ENCODE measurements at regions of chr13 and their contacts with region 1.

Region 1: GRCh38 chr13:41193919-41194824 is at the start of gene KBTBD7:
- DNase-seq: peak; percentile 99
- H3K4me3 ChIP-seq: peak within 1 kb of the TSS; percentile 73
- H3K27ac ChIP-seq: peak within 1 kb of the TSS; percentile 91
- H3K4me1 ChIP-seq: peaks cover 9% of the 10 kb centered on the region; the same call in 1 of the 2 replicates
- H3K27me3 ChIP-seq: no peaks in the 10 kb centered on the region
- total RNA-seq, gene KBTBD7: 4.4 and 4.6 TPM in 2 replicates

Region 2: DNA sequence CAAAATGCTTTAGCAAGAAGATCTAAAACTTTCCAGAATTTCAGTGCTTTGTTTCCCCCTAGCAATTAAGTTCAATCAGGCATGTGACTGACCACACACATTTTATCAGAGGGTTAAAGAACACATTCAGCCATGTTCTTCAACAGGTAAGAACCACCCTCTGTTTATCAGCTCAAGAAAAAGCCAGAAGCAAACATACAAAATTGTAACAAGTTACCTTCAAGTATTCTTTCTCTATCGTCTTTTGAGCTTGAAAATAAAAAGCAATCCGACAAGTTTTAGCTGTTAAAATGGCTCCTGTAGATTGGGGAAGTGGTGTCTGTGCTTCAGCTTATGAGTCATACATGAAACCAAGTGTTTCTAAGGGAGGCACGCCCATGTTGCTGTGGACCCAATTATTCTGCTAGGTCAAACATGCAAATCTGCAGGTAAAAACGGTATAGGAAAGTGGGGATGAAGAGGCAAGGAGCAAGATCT is 175.1 kb before region 1 on chr13 and contains the start of gene ELF1:
- in situ Hi-C with region 1: no loop called
- DNase-seq: peak; percentile 82
- H3K4me3 ChIP-seq: peak within 1 kb of the TSS; percentile 51
- H3K27ac ChIP-seq: peak within 1 kb of the TSS; percentile 64
- H3K4me1 ChIP-seq: peaks cover 9% of the 10 kb centered on the region
- H3K27me3 ChIP-seq: no peaks in the 10 kb centered on the region
- total RNA-seq, gene ELF1: 36.1 and 43.8 TPM in 2 replicates

Region 3: GRCh38 chr13:41085961-41086585 is 108.1 kb before region 1 on chr13:
- in situ Hi-C with region 1: loop called (anchors 10 kb)
- DNase-seq: no peak
- H3K4me3 ChIP-seq: no peak overlapping the region
- H3K27ac ChIP-seq: no peak overlapping the region
- H3K4me1 ChIP-seq: no peaks in the 10 kb centered on the region
- H3K27me3 ChIP-seq: no peaks in the 10 kb centered on the region